ENCODE measurements at regions of chr5 and their contacts with region 1.

Region 1: DNA sequence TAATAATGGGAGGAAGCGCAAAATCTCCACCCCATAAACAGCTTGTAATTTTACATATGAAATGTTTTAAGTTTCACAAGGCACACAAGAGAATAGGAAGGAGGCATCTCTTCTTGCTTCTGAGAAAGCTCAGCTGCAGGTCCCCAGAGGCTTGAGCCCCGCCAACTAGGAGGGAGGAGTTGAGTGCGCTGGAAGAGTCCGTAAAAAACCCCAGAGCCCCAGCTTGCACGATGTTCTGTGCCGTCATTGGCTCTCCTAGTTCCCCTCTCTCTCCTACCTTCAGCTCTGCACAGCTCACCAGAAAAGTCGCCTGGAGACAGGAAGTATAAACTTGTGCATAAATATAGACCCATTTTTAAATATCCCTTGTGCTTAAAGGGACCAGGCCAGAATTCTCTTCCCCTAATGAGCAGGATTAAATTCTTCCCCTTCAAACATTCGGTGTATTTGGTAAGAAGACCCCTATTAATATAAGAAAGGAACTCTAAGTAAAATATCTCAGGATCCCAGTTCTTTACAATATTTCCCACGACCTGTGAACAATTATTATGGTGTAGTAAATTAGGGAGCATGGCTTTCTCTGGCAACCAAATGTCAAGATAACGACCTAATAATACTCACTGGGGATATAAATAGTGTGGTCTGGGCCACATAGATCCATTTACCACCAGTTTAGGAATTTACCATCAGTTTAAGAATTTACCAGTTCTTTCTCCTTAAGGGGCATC is 13.7 kb downstream of the GLRX start:
- DNase-seq: peak; percentile 98
- ATAC-seq: peak; percentile 100
- H3K4me3 ChIP-seq: peak overlapping the region; percentile 36; the same call in 1 of the 2 replicates
- H3K27ac ChIP-seq: peak overlapping the region; percentile 97
- H3K4me1 ChIP-seq: peaks cover 29% of the 10 kb centered on the region
- H3K27me3 ChIP-seq: no peaks in the 10 kb centered on the region
- CTCF ChIP-seq: no peak
- EP300 ChIP-seq: peak; percentile 12 to 13; a peak in 1 of 4 replicates
- POLR2A ChIP-seq: no peak
- RAD21 ChIP-seq: no peak

Region 2: GRCh38 chr5:95646554-95647431 is 162.1 kb before region 1 on chr5 and contains the start of gene RFESD:
- CTCF ChIA-PET with region 1: interaction called, 7 read pairs
- POLR2A ChIA-PET with region 1: interaction called, 12 read pairs
- RAD21 ChIA-PET with region 1: interaction called, 11 read pairs
- SMC1A ChIA-PET with region 1: interaction called, 4 read pairs
- in situ Hi-C with region 1: no loop called
- intact Hi-C with region 1: no loop called
- DNase-seq: peak; percentile 83
- ATAC-seq: peak; percentile 97
- H3K4me3 ChIP-seq: peak within 1 kb of the TSS; percentile 75
- H3K27ac ChIP-seq: peak within 1 kb of the TSS; percentile 80
- H3K4me1 ChIP-seq: peaks cover 5% of the 10 kb centered on the region
- H3K27me3 ChIP-seq: no peaks in the 10 kb centered on the region
- CTCF ChIP-seq: peak in 2 of 3 experiments; percentile 2 to 9; a peak in 1 of 6 replicates
- EP300 ChIP-seq: no peak
- POLR2A ChIP-seq: peak; percentile 88
- RAD21 ChIP-seq: 0 out of 2 replicates have a peak, but pooled peaks have one; percentile 1
- polyA plus RNA-seq, gene RFESD: 14.0 to 14.7 TPM

Region 3: GRCh38 chr5:95786901-95787300 is 21.9 kb before region 1 on chr5:
- CTCF ChIA-PET with region 1: interaction called, 56 read pairs
- POLR2A ChIA-PET with region 1: interaction called, 7 read pairs
- RAD21 ChIA-PET with region 1: interaction called, 38 read pairs
- SMC1A ChIA-PET with region 1: interaction called, 47 read pairs
- in situ Hi-C with region 1: no loop called
- intact Hi-C with region 1: no loop called
- DNase-seq: no peak
- ATAC-seq: no peak
- H3K4me3 ChIP-seq: no peak overlapping the region
- H3K27ac ChIP-seq: no peak overlapping the region
- H3K4me1 ChIP-seq: no peaks in the 10 kb centered on the region
- H3K27me3 ChIP-seq: no peaks in the 10 kb centered on the region
- CTCF ChIP-seq: no peak
- EP300 ChIP-seq: no peak
- POLR2A ChIP-seq: no peak
- RAD21 ChIP-seq: no peak

Region 4: DNA sequence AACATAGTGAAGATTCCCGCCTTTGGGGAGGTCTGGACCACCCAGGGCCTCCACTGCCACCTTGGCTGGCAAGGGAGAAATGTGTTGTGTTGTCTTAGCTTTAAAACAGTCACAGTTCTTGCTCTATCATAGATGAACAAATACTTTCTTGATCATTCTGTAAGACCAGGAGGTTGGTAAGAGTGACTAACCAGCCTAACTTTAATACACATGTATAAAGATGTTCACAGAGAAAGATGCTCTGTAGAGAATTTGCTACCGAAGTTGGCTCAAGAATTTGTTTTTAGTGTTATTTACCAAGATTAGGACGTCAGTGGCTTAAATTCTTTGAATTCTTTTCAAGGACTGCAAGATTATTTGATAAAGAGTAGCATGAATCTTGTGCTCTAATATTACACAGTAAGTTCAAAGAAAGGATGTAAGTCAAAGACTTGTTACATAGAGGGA is 14.8 kb before region 1 on chr5:
- CTCF ChIA-PET with region 1: interaction called, 4 read pairs
- POLR2A ChIA-PET with region 1: interaction called, 7 read pairs
- RAD21 ChIA-PET with region 1: interaction called, 10 read pairs
- SMC1A ChIA-PET with region 1: interaction called, 47 read pairs
- in situ Hi-C with region 1: no loop called
- intact Hi-C with region 1: no loop called
- DNase-seq: no peak
- ATAC-seq: no peak
- H3K4me3 ChIP-seq: no peak overlapping the region
- H3K27ac ChIP-seq: no peak overlapping the region
- H3K4me1 ChIP-seq: no peaks in the 10 kb centered on the region
- H3K27me3 ChIP-seq: no peaks in the 10 kb centered on the region
- CTCF ChIP-seq: no peak
- EP300 ChIP-seq: no peak
- POLR2A ChIP-seq: no peak
- RAD21 ChIP-seq: no peak

Region 5: DNA sequence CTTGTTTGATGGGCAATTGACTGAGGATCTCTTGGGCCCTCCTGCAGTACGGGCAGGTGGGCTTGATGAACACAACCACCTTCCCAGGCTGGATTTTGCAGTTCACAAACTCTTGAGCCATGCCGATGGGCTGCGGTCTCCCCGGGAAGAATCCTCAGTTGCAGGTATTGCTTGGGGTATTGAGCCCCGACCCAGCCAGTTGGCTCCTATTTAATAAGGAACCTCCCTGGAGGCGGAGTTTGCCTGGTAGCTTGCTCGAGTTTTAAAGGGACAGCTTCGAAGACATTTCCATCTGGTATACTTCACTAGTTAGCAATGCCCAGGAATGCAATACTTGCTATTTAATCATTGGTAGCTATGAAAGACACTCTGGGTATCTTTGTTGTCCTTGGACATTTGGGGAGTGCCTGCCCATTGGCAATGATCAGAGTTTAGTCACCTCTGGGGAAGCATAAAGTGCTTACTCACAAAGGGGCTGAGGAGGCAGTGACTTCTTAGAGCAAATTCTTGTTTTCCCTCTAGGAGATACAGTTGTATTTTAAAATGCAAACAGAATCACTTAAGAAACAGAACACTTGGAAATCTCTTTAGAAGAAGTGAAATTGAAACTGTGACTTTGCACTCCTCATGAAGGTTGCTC is 13.8 kb after region 1 on chr5 and contains the start of gene GLRX:
- CTCF ChIA-PET with region 1: interaction called, 57 read pairs
- POLR2A ChIA-PET with region 1: interaction called, 153 read pairs
- RAD21 ChIA-PET with region 1: interaction called, 149 read pairs
- SMC1A ChIA-PET with region 1: interaction called, 217 read pairs
- in situ Hi-C with region 1: no loop called
- intact Hi-C with region 1: no loop called
- DNase-seq: no peak
- ATAC-seq: peak; percentile 66
- H3K4me3 ChIP-seq: peak within 1 kb of the TSS; percentile 87
- H3K27ac ChIP-seq: peak within 1 kb of the TSS; percentile 86
- H3K4me1 ChIP-seq: peaks cover 26% of the 10 kb centered on the region
- H3K27me3 ChIP-seq: no peaks in the 10 kb centered on the region
- CTCF ChIP-seq: no peak
- EP300 ChIP-seq: 0 out of 4 replicates have a peak, but pooled peaks of 1 of the 2 experiments have one; percentile 33
- POLR2A ChIP-seq: peak; percentile 69
- RAD21 ChIP-seq: no peak
- polyA plus RNA-seq, gene GLRX: 311 to 366 TPM

Region 6: DNA sequence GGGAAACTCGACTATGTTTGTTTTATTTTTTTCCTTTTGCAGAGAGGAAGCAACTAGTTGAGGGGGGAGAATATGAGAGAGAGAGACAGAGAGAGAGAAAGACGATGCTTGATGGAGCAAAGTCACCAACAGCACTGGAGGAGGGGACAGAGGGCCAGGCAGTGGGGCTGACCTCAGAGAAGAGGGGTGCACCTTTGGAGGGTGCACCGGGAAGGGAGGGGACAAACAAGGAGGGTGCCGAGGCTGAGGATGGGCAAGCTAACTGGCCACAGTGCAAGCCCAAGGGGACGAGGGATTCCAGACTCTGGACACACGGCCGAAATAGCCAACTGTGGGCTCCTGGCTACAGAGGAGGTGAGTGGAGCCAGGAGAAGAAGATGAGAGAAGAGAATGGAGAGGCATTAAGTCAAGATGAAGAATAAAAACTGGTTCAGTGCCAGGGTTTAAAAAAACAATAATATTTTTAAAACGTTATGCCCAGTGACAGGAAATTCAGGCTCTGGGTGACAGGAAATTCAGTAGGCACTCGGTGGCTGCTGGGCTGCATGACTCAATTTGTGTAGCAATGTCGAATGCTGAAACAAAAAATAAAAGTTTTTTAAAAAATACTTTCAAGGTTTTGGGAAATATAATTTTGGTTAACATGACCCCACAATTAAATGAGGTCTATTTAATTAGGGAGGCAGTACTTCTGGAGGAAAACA is 27.0 kb after region 1 on chr5:
- CTCF ChIA-PET with region 1: interaction called, 39 read pairs
- POLR2A ChIA-PET with region 1: interaction called, 30 read pairs
- RAD21 ChIA-PET with region 1: interaction called, 39 read pairs
- SMC1A ChIA-PET with region 1: interaction called, 320 read pairs
- in situ Hi-C with region 1: no loop called
- intact Hi-C with region 1: loop called (anchors 1 kb)
- DNase-seq: no peak
- ATAC-seq: peak; percentile 45
- H3K4me3 ChIP-seq: peak overlapping the region; percentile 72
- H3K27ac ChIP-seq: peak overlapping the region; percentile 86
- H3K4me1 ChIP-seq: peaks cover 22% of the 10 kb centered on the region
- H3K27me3 ChIP-seq: no peaks in the 10 kb centered on the region
- CTCF ChIP-seq: no peak
- EP300 ChIP-seq: no peak
- POLR2A ChIP-seq: no peak
- RAD21 ChIP-seq: no peak

Measured in GM12878 (cell line).